ENCODE measurements at regions of chr15 and their contacts with region 1.

Region 1: GRCh38 chr15:70741107-70741531 is 22.2 kb downstream of the UACA start:
- DNase-seq: no peak
- ATAC-seq: peak; percentile 73
- H3K4me3 ChIP-seq: no peak overlapping the region
- H3K27ac ChIP-seq: peak overlapping the region; percentile 97
- H3K4me1 ChIP-seq: peaks cover 77% of the 10 kb centered on the region
- H3K27me3 ChIP-seq: no peaks in the 10 kb centered on the region
- CTCF ChIP-seq: no peak

Region 2: DNA sequence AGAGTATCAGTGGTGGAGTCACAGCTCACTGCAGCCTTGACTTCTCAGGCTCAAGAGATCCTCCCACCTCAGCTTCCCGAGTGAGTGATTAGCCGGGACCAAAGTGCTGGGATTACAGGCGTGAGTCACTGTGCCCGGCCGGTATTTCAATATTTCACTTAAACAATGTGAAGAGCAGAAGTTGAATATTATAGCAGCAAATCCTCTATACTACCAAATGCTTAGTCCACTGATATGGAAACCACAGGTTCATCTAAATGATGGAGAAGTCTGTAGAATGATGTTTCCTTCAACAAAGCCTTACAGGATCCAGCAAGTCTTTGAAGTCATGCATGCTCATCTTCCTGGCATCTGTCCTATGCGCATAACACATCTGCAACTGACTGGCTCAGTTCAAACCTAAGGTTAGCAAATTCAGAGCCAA is 42.5 kb after region 1 on chr15:
- CTCF ChIA-PET with region 1: no interaction called
- POLR2A ChIA-PET with region 1: interaction called, 10 read pairs
- in situ Hi-C with region 1: no loop called
- intact Hi-C with region 1: no loop called
- DNase-seq: no peak
- ATAC-seq: peak; percentile 66
- H3K4me3 ChIP-seq: 0 out of 4 replicates have a peak overlapping the region, but pooled peaks of 1 of the 2 experiments have one; percentile 9
- H3K27ac ChIP-seq: peak overlapping the region; percentile 84
- H3K4me1 ChIP-seq: peaks cover 50% of the 10 kb centered on the region
- H3K27me3 ChIP-seq: no peaks in the 10 kb centered on the region
- CTCF ChIP-seq: no peak

Region 3: DNA sequence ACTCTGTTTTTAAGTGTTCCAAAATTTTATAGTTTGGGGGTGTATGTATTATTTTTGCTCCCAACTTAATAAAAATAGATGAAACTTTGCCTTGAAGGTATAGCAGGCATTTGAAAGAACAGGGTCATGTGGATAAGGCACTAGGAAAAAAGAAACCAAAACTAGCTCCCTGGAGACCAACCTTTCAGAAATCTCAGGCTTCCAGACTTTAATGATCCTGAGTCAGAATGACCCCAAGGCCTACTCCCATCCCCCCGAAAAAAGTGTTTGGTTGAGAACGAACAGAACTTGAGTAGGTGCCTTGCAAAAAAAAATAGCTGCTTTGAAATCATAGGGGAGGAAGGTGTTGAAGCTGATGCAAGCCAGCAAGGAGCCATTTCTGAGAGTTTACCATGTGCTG is 683.6 kb after region 1 on chr15:
- CTCF ChIA-PET with region 1: no interaction called
- POLR2A ChIA-PET with region 1: no interaction called
- in situ Hi-C with region 1: no loop called
- intact Hi-C with region 1: no loop called
- DNase-seq: no peak
- ATAC-seq: no peak
- H3K4me3 ChIP-seq: no peak overlapping the region
- H3K27ac ChIP-seq: no peak overlapping the region
- H3K4me1 ChIP-seq: no peaks in the 10 kb centered on the region
- H3K27me3 ChIP-seq: no peaks in the 10 kb centered on the region
- CTCF ChIP-seq: no peak

Measured in Panc1 (cell line).